ENCODE measurements at regions of chr10 and their contacts with region 1.

Region 1: GRCh38 chr10:79149662-79150443 is 81.1 kb downstream of the ZMIZ1 start:
- DNase-seq: peak; percentile 82
- H3K4me3 ChIP-seq: no peak overlapping the region
- H3K27ac ChIP-seq: peak overlapping the region; percentile 94 to 99 (median 95)
- H3K4me1 ChIP-seq: peaks cover 92 to 99% of the 10 kb centered on the region in 2 donors
- H3K27me3 ChIP-seq: no peaks in the 10 kb centered on the region
- CTCF ChIP-seq: no peak
- POLR2A ChIP-seq: no peak

Region 2: GRCh38 chr10:78964952-78965633 is 184.8 kb before region 1 on chr10:
- intact Hi-C with region 1: loop called (anchors 5 kb)
- DNase-seq: peak; percentile 98
- H3K4me3 ChIP-seq: no peak overlapping the region
- H3K27ac ChIP-seq: peak overlapping the region; percentile 86 to 97 (median 89)
- H3K4me1 ChIP-seq: peaks cover 26 to 71% of the 10 kb centered on the region in 2 donors
- H3K27me3 ChIP-seq: no peaks in the 10 kb centered on the region
- CTCF ChIP-seq: peak in 1 of 6 experiments; percentile 6
- POLR2A ChIP-seq: peak in 1 of 2 donors; percentile 43

Measured in thyroid gland (tissue), 4 donors.